ENCODE measurements at regions of chr19 and their contacts with region 1.

Region 1: DNA sequence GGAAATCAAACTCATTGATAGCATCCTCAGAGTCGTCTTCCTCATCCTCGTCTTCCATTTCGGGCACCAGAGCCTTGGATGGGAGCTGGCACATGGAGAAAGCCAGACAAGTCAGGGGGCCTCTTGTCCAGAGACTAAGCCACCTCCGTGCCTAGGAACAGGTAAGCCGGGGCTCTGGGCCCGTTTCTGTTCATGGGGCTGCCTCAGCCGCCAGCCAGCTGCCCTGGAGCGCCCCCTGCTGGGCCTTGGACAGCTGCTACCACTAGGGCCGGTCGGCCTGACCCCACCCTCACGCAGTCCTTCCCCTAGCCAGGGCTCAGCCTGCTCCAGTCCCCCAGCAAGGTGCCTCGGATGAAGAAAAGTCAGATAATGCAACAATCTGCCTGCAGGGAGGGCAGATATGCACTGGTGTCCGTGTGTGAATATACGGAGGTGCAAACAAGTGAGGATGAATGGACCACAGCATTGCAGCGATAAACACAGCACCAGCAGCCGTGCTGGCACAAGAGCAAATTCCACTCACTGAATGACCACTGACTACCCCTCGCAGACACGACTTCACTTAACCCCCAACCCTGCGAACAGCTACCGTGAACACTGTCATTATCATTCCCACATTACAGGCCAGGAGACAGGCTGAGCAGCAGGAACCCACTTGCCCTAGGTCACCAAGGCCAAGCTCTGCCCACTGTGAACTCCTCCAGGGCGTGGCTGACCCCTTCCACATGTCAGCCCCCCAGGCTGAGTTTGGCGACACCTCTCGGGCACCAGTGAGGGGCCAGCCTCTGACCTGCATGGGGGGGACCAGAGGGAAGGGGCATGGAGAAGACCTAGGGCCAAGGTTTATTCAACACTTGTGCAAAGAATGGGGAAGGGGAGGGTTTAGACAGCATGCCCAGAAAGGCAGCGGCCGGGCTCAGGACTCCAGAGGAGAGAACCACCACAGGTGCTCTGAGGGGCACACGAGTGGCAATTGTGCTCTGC is 12.1 kb upstream of the PRKD2 start:
- DNase-seq: peak; percentile 88
- H3K4me3 Mint-ChIP-seq: no peak overlapping the region
- H3K27ac Mint-ChIP-seq: peak overlapping the region; percentile 81
- H3K4me1 Mint-ChIP-seq: peaks cover 18% of the 10 kb centered on the region
- H3K27me3 Mint-ChIP-seq: no peaks in the 10 kb centered on the region

Region 2: DNA sequence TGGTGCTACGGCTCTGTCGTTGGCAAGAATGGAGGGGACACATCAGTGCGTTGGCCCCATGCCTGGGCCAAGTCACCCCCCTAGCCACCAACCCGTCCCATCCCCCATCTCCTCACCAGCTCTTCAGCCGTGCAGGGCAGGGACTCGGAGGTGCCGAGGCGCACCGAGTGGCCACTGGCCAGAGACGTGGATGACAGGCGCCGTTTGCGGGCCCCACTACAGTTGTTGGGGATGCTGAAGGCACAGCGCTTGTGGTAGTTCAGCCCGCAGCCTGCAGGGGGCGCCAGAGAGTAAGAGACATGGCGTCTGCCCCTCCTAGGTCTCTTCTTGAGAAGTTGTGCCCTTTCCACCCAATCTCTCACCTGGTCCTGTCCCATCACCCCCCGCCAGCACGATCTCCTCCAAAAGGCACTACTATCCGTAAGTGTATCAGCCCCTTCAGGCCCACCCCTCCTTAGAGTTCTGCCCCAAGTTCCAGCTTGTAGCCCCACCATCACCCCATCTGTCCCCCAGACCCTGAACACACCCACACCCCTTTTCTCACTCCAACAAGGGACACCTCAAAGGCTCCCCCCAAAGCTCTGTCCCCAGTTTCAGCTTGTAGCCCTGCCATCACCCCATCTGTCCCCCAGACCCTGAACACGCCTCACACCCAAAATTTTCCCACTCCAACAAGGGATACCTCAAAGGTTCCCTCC is 24.5 kb before region 1 on chr19:
- CTCF ChIA-PET with region 1: interaction called, 73 read pairs
- DNase-seq: peak; percentile 91
- H3K4me3 Mint-ChIP-seq: no peak overlapping the region
- H3K27ac Mint-ChIP-seq: peak overlapping the region; percentile 81
- H3K4me1 Mint-ChIP-seq: peaks cover 16% of the 10 kb centered on the region
- H3K27me3 Mint-ChIP-seq: no peaks in the 10 kb centered on the region

Region 3: GRCh38 chr19:46713781-46714443 is 15.1 kb before region 1 on chr19:
- CTCF ChIA-PET with region 1: interaction called, 40 read pairs
- DNase-seq: peak; percentile 90
- H3K4me3 Mint-ChIP-seq: peak overlapping the region; percentile 96
- H3K27ac Mint-ChIP-seq: peak overlapping the region; percentile 97
- H3K4me1 Mint-ChIP-seq: peaks cover 39% of the 10 kb centered on the region
- H3K27me3 Mint-ChIP-seq: no peaks in the 10 kb centered on the region

Region 4: GRCh38 chr19:46878613-46879375 is 149.8 kb after region 1 on chr19:
- CTCF ChIA-PET with region 1: no interaction called
- DNase-seq: no peak
- H3K4me3 Mint-ChIP-seq: no peak overlapping the region
- H3K27ac Mint-ChIP-seq: no peak overlapping the region
- H3K4me1 Mint-ChIP-seq: no peaks in the 10 kb centered on the region
- H3K27me3 Mint-ChIP-seq: no peaks in the 10 kb centered on the region